CD4-positive, alpha-beta memory T cell (primary cell): ENCODE measurements at regions of chr11 and their contacts with region 1.

Region 1: GRCh38 chr11:118171269-118172062 is 5.0 kb downstream of the SCN2B start:
- DNase-seq: peak; percentile 63 to 72 (median 65)
- H3K4me3 ChIP-seq: no peak overlapping the region
- H3K4me3 Mint-ChIP-seq: peak overlapping the region in 2 of 8 donors; percentile 9 to 12
- H3K27ac ChIP-seq: no peak overlapping the region
- H3K27ac Mint-ChIP-seq: no peak overlapping the region
- H3K4me1 ChIP-seq: peaks cover 8% of the 10 kb centered on the region
- H3K4me1 Mint-ChIP-seq: peaks cover 0 to 5% (median 2%) of the 10 kb centered on the region in 4 donors
- H3K27me3 ChIP-seq: no peaks in the 10 kb centered on the region
- H3K27me3 Mint-ChIP-seq: peaks cover 4 to 15% of the 10 kb centered on the region in 2 donors

Region 2: DNA sequence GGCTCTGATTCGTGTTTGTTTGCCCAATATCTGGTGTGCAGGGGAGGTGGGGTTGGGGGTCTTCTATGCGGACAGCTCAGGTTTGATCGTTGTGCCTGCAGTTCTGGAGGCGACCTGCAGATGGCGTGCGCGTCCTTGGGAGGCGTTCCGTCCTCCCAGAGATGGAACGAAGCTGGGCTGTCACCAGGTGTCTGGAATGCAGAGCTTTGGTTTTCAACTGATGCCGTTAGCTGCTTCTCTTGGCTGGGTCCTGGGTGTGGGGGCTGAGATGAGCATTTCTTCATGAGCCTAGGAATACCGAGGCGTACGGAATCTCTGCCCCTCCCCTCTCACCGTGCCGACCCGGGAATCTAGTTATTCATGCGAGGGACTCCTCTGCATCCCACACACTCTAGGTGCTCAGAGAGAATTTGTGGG is 745.2 kb before region 1 on chr11:
- CTCF ChIA-PET with region 1: interaction called, 16 read pairs
- POLR2A ChIA-PET with region 1: no interaction called
- intact Hi-C with region 1: loop called (anchors 10 kb)
- DNase-seq: peak in 4 of 5 donors; percentile 42 to 59 (median 52)
- H3K4me3 ChIP-seq: no peak overlapping the region
- H3K4me3 Mint-ChIP-seq: peak overlapping the region in 4 of 8 donors; percentile 6 to 60 (median 36)
- H3K27ac ChIP-seq: no peak overlapping the region
- H3K27ac Mint-ChIP-seq: no peak overlapping the region
- H3K4me1 ChIP-seq: peaks cover 6% of the 10 kb centered on the region
- H3K4me1 Mint-ChIP-seq: peaks cover 0 to 13% (median under 1%) of the 10 kb centered on the region in 4 donors
- H3K27me3 ChIP-seq: no peaks in the 10 kb centered on the region
- H3K27me3 Mint-ChIP-seq: peaks cover 0 to 1% of the 10 kb centered on the region in 2 donors

Region 3: GRCh38 chr11:117843666-117844484 is 327.6 kb before region 1 on chr11:
- CTCF ChIA-PET with region 1: interaction called, 18 read pairs
- POLR2A ChIA-PET with region 1: no interaction called
- intact Hi-C with region 1: loop called (anchors 1 kb)
- DNase-seq: peak; percentile 72 to 79 (median 76)
- H3K4me3 ChIP-seq: no peak overlapping the region
- H3K4me3 Mint-ChIP-seq: no peak overlapping the region
- H3K27ac ChIP-seq: no peak overlapping the region
- H3K27ac Mint-ChIP-seq: peak overlapping the region in 2 of 7 donors; percentile 56 to 79
- H3K4me1 ChIP-seq: peaks cover 4% of the 10 kb centered on the region
- H3K4me1 Mint-ChIP-seq: peaks cover 0 to 8% (median 2%) of the 10 kb centered on the region in 4 donors
- H3K27me3 ChIP-seq: no peaks in the 10 kb centered on the region
- H3K27me3 Mint-ChIP-seq: no peaks in the 10 kb centered on the region

Region 4: GRCh38 chr11:118145285-118146227 is 25.9 kb before region 1 on chr11:
- CTCF ChIA-PET with region 1: interaction called, 109 read pairs
- POLR2A ChIA-PET with region 1: interaction called, 6 read pairs
- intact Hi-C with region 1: loop called (anchors 1 kb)
- DNase-seq: peak; percentile 81 to 90 (median 86)
- H3K4me3 ChIP-seq: peak overlapping the region; percentile 43 to 62
- H3K4me3 Mint-ChIP-seq: peak overlapping the region; percentile 63 to 93 (median 85)
- H3K27ac ChIP-seq: no peak overlapping the region
- H3K27ac Mint-ChIP-seq: peak overlapping the region in 4 of 7 donors; percentile 41 to 88 (median 78)
- H3K4me1 ChIP-seq: peaks cover 4% of the 10 kb centered on the region
- H3K4me1 Mint-ChIP-seq: peaks cover 2 to 5% (median 4%) of the 10 kb centered on the region in 4 donors
- H3K27me3 ChIP-seq: peaks cover 13% of the 10 kb centered on the region
- H3K27me3 Mint-ChIP-seq: peaks cover 34 to 46% of the 10 kb centered on the region in 2 donors

Region 5: DNA sequence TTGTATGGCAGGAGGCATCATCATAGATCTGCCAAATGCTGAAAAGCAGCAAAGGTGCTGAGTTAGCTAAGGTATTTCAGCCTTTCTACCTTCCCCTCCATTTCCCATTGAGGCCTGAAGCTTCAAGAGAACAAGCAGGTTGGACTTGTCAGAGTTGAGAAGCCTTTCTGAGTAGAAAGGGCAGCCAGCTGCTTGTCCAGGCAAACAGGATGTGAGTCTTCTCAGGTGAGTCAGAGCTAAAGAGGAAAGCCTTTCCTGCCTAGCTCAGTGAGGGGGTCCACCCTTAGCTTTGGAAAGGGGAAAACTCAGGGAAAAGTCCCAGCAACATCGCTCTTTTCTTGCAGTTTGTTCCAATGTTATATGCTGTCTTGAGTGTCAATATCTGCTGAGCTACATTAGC is 105.8 kb after region 1 on chr11:
- CTCF ChIA-PET with region 1: interaction called, 12 read pairs
- POLR2A ChIA-PET with region 1: no interaction called
- intact Hi-C with region 1: no loop called
- DNase-seq: no peak
- H3K4me3 ChIP-seq: no peak overlapping the region
- H3K4me3 Mint-ChIP-seq: no peak overlapping the region
- H3K27ac ChIP-seq: no peak overlapping the region
- H3K27ac Mint-ChIP-seq: peak overlapping the region in 1 of 7 donors; percentile 45
- H3K4me1 ChIP-seq: peaks cover 10% of the 10 kb centered on the region
- H3K4me1 Mint-ChIP-seq: peaks cover 10 to 24% (median 17%) of the 10 kb centered on the region in 4 donors
- H3K27me3 ChIP-seq: no peaks in the 10 kb centered on the region
- H3K27me3 Mint-ChIP-seq: no peaks in the 10 kb centered on the region

Region 6: DNA sequence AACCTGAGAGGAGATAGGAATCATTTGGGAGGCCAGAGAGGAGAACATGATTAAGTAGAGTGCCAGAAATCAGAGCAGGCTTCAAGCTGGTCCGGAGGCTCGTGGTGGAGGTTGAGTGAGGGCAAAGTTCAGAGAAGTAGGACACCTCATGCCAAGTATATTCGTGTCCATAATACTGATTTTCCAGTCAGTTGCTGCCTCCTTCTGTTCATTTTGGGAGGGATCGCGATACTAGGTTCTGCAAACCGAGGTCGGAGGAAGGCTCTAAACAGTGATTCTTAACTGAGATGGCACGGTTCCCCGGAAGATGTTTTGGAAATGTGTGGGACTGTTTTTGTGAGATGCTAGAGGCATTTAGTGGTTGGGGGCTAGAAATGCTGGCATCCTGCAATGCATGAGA is 119.5 kb after region 1 on chr11:
- CTCF ChIA-PET with region 1: interaction called, 19 read pairs
- POLR2A ChIA-PET with region 1: no interaction called
- intact Hi-C with region 1: no loop called
- DNase-seq: peak; percentile 46 to 61 (median 49)
- H3K4me3 ChIP-seq: no peak overlapping the region
- H3K4me3 Mint-ChIP-seq: peak overlapping the region in 1 of 8 donors; percentile 40
- H3K27ac ChIP-seq: no peak overlapping the region
- H3K27ac Mint-ChIP-seq: peak overlapping the region in 2 of 7 donors; percentile 18 to 36
- H3K4me1 ChIP-seq: peaks cover 4% of the 10 kb centered on the region
- H3K4me1 Mint-ChIP-seq: peaks cover 8 to 13% (median 10%) of the 10 kb centered on the region in 4 donors
- H3K27me3 ChIP-seq: no peaks in the 10 kb centered on the region
- H3K27me3 Mint-ChIP-seq: no peaks in the 10 kb centered on the region